Pancreas (tissue), 10 donors: ENCODE measurements at regions of chr9 and their contacts with region 1.

Region 1: GRCh38 chr9:15422372-15423230 is at the start of gene SNAPC3:
- DNase-seq: peak; percentile 91 to 96 (median 93)
- ATAC-seq: peak; percentile 98 to 100 (median 98)
- H3K4me3 ChIP-seq: peak within 1 kb of the TSS; percentile 68 to 96 (median 94)
- H3K27ac ChIP-seq: peak within 1 kb of the TSS; percentile 86 to 97 (median 90)
- H3K4me1 ChIP-seq: peaks cover 0 to 22% (median 16%) of the 10 kb centered on the region in 3 donors
- H3K27me3 ChIP-seq: no peaks in the 10 kb centered on the region
- CTCF ChIP-seq: no peak
- total RNA-seq, gene SNAPC3: 7.0 to 16.0 (median 8.7) TPM

Region 2: DNA sequence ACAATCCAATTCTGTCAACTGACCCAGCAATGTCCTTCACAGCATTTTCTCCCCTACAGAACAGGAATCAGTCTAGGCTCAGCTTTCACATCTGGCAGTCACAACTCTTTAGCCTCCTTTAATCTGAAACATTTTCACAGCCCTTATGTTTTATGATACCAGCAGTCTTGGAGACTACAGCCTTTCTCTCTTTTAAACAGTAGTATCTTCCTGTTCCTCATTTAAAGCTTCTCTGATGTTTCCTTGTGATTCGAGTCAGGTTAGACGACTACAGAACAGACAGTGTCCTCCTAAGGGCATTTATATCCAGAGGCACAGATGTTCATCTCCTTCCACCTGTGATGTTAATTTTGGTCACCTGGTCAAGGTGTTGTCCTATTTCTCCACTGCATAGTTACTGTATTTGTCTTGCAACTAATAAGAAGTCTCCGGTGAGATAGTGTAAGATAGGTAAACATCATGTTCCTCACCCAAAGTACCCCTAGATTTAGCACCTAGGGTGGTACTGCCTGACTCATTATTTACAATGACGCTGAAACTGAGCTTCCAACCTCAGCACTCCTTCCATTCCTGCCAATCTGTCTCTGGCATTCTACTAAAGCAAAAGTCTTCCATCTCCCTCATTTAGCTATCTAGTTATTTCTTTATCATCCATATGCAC is 136.3 kb before region 1 on chr9:
- intact Hi-C with region 1: loop called in 1 of 3 experiments (anchors 10 kb)
- DNase-seq: no peak
- ATAC-seq: peak in 2 of 4 donors; percentile 22 to 23
- H3K4me3 ChIP-seq: no peak overlapping the region
- H3K27ac ChIP-seq: no peak overlapping the region
- H3K4me1 ChIP-seq: no peaks in the 10 kb centered on the region
- H3K27me3 ChIP-seq: no peaks in the 10 kb centered on the region
- CTCF ChIP-seq: no peak